ENCODE measurements at regions of chr18 and their contacts with region 1.

Region 1: GRCh38 chr18:35005963-35006577 is 35.1 kb upstream of the MAPRE2 start:
- DNase-seq: no peak
- ATAC-seq: peak; percentile 72 to 94 (median 85)
- H3K4me3 ChIP-seq: no peak overlapping the region
- H3K27ac ChIP-seq: no peak overlapping the region
- H3K4me1 ChIP-seq: peaks cover 13% of the 10 kb centered on the region
- H3K27me3 ChIP-seq: no peaks in the 10 kb centered on the region
- CTCF ChIP-seq: peak; percentile 70

Region 2: DNA sequence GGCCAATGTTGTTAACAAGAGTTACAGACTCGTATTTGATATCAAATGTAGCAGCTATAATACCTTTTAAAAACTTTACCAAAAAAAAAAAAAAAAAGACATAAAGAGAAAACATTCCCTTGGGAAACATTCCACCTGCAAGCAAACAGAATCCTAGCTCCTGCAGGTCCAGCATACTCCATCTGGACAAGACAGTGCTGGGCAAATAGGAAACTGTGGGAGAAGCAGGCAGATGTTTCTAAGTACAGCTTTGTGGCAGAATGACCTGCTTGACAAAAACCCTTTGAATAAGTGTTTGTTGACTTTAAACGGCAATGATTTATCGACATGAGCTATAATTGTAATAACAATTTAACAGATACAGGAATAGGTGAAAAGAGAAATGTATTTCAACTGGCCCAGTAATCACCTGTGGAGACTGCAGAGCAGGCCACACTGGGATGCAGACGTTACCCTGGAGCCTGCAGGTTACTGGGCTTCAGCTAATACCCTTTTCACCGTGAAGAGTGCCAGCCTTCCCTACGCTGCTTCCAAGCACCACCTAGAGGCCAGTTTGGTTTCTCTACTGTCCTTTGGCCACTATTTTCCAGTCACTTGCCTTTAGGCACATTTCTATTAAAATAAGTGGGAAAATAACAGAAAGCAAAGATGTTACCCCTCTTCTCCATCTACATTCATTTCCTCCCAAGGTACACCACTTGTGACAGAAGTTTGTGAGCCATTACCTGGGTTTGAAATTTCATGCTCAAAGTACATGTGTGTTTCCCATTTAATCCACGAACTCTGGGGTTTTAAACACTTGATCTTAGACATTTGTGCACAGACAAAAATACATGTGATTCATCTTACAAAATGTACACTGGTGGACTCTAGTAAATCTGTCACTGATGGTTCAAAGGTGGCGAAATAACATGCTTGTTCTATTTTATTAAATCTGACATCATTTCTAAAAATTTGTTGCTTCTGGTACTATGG is 137.8 kb after region 1 on chr18:
- intact Hi-C with region 1: loop called (anchors 2 kb)
- DNase-seq: peak; percentile 44 to 65
- ATAC-seq: peak; percentile 87 to 96 (median 92)
- H3K4me3 ChIP-seq: no peak overlapping the region
- H3K27ac ChIP-seq: no peak overlapping the region
- H3K4me1 ChIP-seq: no peaks in the 10 kb centered on the region
- H3K27me3 ChIP-seq: no peaks in the 10 kb centered on the region
- CTCF ChIP-seq: peak; percentile 76

Measured in psoas muscle (tissue), 8 donors.